GM10248 (cell line): ENCODE measurements at regions of chr1 and their contacts with region 1.

Region 1: GRCh38 chr1:147273409-147274336 is 31.2 kb downstream of the CHD1L start:
- DNase-seq: peak; percentile 57
- CTCF ChIP-seq: peak; percentile 56

Region 2: DNA sequence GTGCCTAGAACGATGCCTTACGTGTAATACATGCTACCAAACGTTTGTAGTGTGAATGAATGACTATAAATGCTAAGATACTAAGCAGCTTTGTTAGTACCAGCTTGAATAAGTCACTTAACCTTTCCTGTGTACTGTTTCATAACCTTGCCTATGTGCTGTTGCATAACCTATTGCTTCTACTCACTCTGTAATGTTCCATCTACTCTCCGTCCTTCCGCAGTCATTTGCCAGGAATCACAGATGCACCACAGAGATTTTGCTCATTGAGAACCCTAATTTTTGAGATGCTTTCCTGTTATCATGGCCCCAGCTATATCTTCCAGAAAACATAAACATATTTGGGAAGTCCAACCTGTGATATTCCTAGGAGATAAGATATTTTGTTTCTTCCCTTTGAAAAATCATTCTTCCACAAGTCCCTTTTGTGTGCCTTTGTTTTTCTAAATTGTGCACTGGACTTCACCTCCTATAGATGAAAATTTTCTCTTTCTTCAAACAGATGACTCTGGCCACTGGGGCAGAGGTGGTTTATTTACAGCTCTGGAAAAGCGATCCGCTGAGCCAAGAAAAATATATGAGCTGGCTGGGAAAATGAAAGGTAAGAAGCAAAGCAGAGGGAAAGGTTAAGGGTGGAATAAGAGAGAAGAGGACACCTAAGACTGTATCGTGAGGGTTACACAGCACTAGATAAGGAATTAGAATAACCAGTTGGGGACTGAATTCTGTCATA is 13.6 kb after region 1 on chr1:
- CTCF ChIA-PET with region 1: interaction called, 14 read pairs
- POLR2A ChIA-PET with region 1: no interaction called
- DNase-seq: no peak
- CTCF ChIP-seq: no peak

Region 3: GRCh38 chr1:147377263-147378246 is 103.9 kb after region 1 on chr1:
- CTCF ChIA-PET with region 1: interaction called, 10 read pairs
- POLR2A ChIA-PET with region 1: no interaction called
- DNase-seq: no peak
- CTCF ChIP-seq: no peak

Region 4: DNA sequence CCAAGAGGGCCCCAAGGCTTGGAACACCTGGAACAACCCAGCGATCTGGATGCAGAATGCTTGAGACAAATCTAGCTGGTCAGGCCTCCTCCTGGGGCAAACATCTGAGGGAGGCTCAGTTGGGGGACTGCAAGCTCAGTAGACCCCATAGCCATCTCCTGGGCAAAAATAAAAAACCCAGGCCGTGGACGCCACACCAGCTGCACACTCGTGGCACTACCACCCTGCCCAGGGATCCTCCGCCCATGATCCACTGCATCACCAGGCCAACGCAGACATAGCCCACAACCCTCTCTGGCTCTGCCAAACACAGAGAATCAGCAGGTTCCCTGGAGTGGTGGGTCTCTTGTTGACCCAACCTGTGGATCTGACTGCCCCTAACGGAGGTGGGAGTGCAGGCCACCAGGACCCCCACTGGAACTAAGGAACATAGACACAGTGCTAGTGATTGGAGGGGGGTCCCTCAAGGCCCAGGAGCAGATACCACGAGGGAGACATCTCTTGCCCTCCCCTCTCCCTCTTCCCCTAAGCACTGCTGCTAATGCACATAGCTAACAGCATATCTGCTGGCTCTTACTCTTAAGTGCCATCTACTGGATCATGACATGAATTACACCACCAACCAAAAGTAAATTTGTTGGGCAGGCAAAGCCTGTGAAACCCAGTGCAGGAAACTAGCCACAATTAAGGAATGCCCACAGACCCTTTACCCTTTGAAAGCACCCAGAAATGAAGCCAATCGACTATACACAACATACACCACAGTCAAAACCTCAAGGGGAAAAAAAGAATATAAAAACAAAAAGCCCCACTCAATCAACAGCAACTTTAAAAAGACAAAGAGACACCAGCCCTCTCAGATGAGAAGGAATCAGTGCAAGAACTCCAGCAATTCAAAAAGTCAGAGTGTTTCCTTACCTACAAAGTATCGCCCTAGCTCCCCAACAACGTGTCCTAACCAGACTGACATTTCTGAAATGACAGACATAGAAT is 116.2 kb after region 1 on chr1:
- CTCF ChIA-PET with region 1: interaction called, 71 read pairs
- POLR2A ChIA-PET with region 1: no interaction called
- DNase-seq: peak; percentile 65
- CTCF ChIP-seq: peak; percentile 71